ENCODE measurements at regions of chrX and their contacts with region 1.

Region 1: DNA sequence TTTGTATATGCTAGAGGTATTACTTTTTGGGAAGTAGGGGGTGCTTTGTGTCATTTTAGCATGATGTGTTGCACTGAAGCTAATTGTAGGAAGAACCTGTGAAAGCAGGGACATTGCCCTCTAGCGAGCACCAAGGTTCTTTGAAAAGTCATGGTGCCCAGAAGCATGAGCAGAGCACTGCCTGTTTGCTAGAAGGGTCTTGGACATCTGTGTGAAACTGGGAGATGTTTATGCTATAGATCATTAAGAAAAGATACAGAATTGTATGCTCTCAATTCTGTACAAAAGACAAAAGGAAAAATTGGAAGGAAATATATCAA is 14.7 kb downstream of the GRPR start:
- DNase-seq: peak; percentile 32
- ATAC-seq: peak; percentile 28
- H3K4me3 ChIP-seq: no peak overlapping the region
- H3K4me3 Mint-ChIP-seq: no peak overlapping the region
- H3K27ac ChIP-seq: no peak overlapping the region
- H3K27ac Mint-ChIP-seq: peak overlapping the region; percentile 1
- H3K4me1 ChIP-seq: peaks cover 13% of the 10 kb centered on the region in 2 donors
- H3K4me1 Mint-ChIP-seq: peaks cover 10% of the 10 kb centered on the region
- H3K27me3 ChIP-seq: peaks cover 0 to 2% (median 0%) of the 10 kb centered on the region in 4 experiments
- H3K27me3 Mint-ChIP-seq: peaks cover 5% of the 10 kb centered on the region
- CTCF ChIP-seq: no peak

Region 2: DNA sequence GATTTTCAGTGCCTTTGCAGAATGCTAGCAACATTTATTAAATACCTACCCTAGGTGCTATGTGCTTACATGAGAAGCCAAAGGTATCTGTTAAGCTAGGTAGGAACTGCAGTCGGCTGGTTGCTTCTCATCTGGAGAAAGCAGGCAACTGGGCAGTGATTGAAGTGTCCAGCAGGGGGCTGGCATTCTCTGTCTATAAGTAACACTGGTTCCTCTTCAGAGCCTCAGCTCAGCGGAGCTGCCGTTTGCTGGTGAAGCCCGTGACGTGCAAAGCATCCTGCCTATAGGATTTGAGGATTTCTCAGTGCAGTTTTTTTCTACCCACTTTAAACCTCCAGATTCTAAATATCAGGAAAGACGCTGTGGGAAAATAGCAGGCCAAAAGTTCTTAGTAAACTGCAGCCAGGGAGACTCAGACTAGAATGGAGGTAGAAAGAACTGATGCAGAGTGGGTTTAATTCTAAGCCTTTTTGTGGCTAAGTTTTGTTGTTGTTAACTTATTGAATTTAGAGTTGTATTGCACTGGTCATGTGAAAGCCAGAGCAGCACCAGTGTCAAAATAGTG is 14.8 kb before region 1 on chrX and contains the start of gene GRPR:
- CTCF ChIA-PET with region 1: interaction called, 16 read pairs
- POLR2A ChIA-PET with region 1: no interaction called
- intact Hi-C with region 1: no loop called
- DNase-seq: peak; percentile 76
- ATAC-seq: peak; percentile 89
- H3K4me3 ChIP-seq: no peak within 1 kb of the TSS
- H3K4me3 Mint-ChIP-seq: no peak within 1 kb of the TSS
- H3K27ac ChIP-seq: no peak within 1 kb of the TSS
- H3K27ac Mint-ChIP-seq: no peak within 1 kb of the TSS
- H3K4me1 ChIP-seq: peaks cover 19 to 27% of the 10 kb centered on the region in 2 donors
- H3K4me1 Mint-ChIP-seq: peaks cover 28% of the 10 kb centered on the region
- H3K27me3 ChIP-seq: peaks cover 0 to 8% (median 0%) of the 10 kb centered on the region in 4 experiments
- H3K27me3 Mint-ChIP-seq: no peaks in the 10 kb centered on the region
- CTCF ChIP-seq: peak; percentile 68
- total RNA-seq, gene GRPR: 0.42 and 0.51 TPM in 2 replicates